Esophagus squamous epithelium (tissue), 5 donors: ENCODE measurements at regions of chr4 and their contacts with region 1.

Region 1: GRCh38 chr4:168803732-168804131 is 206.3 kb downstream of the CBR4 start:
- DNase-seq: no peak
- H3K4me3 ChIP-seq: no peak overlapping the region
- H3K27ac ChIP-seq: peak overlapping the region in 3 of 4 donors; percentile 22 to 45 (median 28)
- H3K4me1 ChIP-seq: peaks cover 10 to 15% (median 12%) of the 10 kb centered on the region in 3 donors
- H3K27me3 ChIP-seq: no peaks in the 10 kb centered on the region
- CTCF ChIP-seq: no peak
- POLR2A ChIP-seq: no peak

Region 2: DNA sequence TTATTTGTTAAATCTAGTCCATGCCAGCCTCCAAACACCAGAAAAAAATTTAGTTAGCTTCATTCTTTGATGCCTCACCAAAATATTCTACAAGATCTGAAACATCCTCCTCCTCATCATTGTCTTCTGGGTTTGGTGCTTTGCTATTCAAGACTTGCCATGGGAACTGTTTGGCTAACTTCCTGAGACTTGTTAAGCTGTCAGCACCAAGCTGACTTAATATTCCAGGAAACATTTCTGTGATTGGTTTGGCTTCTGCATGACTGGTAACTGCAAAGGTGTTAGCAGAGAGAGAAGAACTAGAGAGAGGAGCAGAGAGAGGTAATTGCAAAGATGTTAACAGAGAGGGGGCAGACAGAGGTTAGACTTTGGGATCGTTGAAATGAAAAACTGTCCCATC is 205.5 kb before region 1 on chr4:
- intact Hi-C with region 1: no loop called
- DNase-seq: no peak
- H3K4me3 ChIP-seq: no peak overlapping the region
- H3K27ac ChIP-seq: no peak overlapping the region
- H3K4me1 ChIP-seq: peaks cover 0 to 28% (median 12%) of the 10 kb centered on the region in 3 donors
- H3K27me3 ChIP-seq: no peaks in the 10 kb centered on the region
- CTCF ChIP-seq: no peak
- POLR2A ChIP-seq: no peak

Region 3: DNA sequence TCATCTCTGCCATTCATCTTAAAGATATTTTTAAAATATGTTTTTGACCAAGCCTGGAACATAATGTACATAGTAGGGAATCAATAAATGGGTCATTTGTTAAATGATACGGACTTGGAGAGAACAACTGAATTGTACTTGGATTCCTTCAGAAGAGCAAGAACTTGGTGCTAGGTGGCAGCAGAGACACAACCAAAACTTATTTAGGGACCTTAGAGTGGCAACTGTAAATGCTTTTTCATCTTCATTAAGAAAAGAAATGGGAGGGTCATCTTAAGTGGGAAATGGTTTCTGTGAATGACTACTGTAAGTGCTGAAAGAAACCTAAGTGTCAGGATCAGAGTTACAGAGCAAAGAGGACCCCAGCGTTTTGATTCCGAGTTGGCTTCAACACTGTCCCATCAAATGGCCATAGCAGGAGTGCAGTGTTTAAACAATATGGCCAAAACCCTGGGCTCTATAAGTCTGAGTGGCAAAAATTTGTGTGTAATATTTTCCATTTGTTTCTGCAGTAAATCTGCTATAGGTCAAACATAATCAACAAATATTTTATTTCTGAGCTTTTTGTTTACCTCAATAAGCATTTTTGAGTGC is 93.3 kb before region 1 on chr4:
- intact Hi-C with region 1: loop called (anchors 10 kb)
- DNase-seq: no peak
- H3K4me3 ChIP-seq: no peak overlapping the region
- H3K27ac ChIP-seq: peak overlapping the region in 3 of 4 donors; percentile 9 to 71 (median 71)
- H3K4me1 ChIP-seq: peaks cover 0 to 23% (median 14%) of the 10 kb centered on the region in 3 donors
- H3K27me3 ChIP-seq: no peaks in the 10 kb centered on the region
- CTCF ChIP-seq: peak; percentile 19 to 58 (median 54)
- POLR2A ChIP-seq: no peak